ENCODE measurements at regions of chr12 and their contacts with region 1.

Region 1: GRCh38 chr12:15563663-15564062 is 225.5 kb downstream of the EPS8 start:
- DNase-seq: peak in 6 of 9 donors; percentile 39 to 54 (median 50)
- ATAC-seq: peak; percentile 84
- H3K4me3 ChIP-seq: peak overlapping the region; percentile 38
- H3K4me3 Mint-ChIP-seq: peak overlapping the region; percentile 54 to 87 (median 82)
- H3K27ac ChIP-seq: peak overlapping the region; percentile 82
- H3K27ac Mint-ChIP-seq: peak overlapping the region; percentile 87 to 96 (median 94)
- H3K4me1 ChIP-seq: peaks cover 0 to 37% of the 10 kb centered on the region in 2 donors
- H3K4me1 Mint-ChIP-seq: peaks cover 36 to 89% (median 77%) of the 10 kb centered on the region in 7 donors
- H3K27me3 ChIP-seq: no peaks in the 10 kb centered on the region
- H3K27me3 Mint-ChIP-seq: peaks cover 0 to 5% (median 0%) of the 10 kb centered on the region in 5 donors

Region 2: GRCh38 chr12:15276088-15276698 is 287.5 kb before region 1 on chr12:
- CTCF ChIA-PET with region 1: no interaction called
- POLR2A ChIA-PET with region 1: no interaction called
- intact Hi-C with region 1: no loop called
- DNase-seq: peak in 2 of 9 donors; percentile 5 to 13
- ATAC-seq: no peak
- H3K4me3 ChIP-seq: no peak overlapping the region
- H3K4me3 Mint-ChIP-seq: no peak overlapping the region
- H3K27ac ChIP-seq: no peak overlapping the region
- H3K27ac Mint-ChIP-seq: no peak overlapping the region
- H3K4me1 ChIP-seq: no peaks in the 10 kb centered on the region
- H3K4me1 Mint-ChIP-seq: peaks cover 0 to 10% (median 0%) of the 10 kb centered on the region in 7 donors
- H3K27me3 ChIP-seq: no peaks in the 10 kb centered on the region
- H3K27me3 Mint-ChIP-seq: peaks cover 0 to 18% (median 15%) of the 10 kb centered on the region in 5 donors

Region 3: GRCh38 chr12:15575671-15576541 is 12.2 kb after region 1 on chr12:
- CTCF ChIA-PET with region 1: interaction called, 7 read pairs
- POLR2A ChIA-PET with region 1: interaction called, 59 read pairs
- intact Hi-C with region 1: loop called (anchors 1 kb)
- DNase-seq: no peak
- ATAC-seq: no peak
- H3K4me3 ChIP-seq: no peak overlapping the region
- H3K4me3 Mint-ChIP-seq: peak overlapping the region in 3 of 10 donors; percentile 0 to 48 (median 21)
- H3K27ac ChIP-seq: no peak overlapping the region
- H3K27ac Mint-ChIP-seq: peak overlapping the region in 6 of 9 donors; percentile 6 to 74 (median 24)
- H3K4me1 ChIP-seq: peaks cover 0 to 7% of the 10 kb centered on the region in 2 donors
- H3K4me1 Mint-ChIP-seq: peaks cover 11 to 63% (median 47%) of the 10 kb centered on the region in 7 donors
- H3K27me3 ChIP-seq: no peaks in the 10 kb centered on the region
- H3K27me3 Mint-ChIP-seq: no peaks in the 10 kb centered on the region

Region 4: DNA sequence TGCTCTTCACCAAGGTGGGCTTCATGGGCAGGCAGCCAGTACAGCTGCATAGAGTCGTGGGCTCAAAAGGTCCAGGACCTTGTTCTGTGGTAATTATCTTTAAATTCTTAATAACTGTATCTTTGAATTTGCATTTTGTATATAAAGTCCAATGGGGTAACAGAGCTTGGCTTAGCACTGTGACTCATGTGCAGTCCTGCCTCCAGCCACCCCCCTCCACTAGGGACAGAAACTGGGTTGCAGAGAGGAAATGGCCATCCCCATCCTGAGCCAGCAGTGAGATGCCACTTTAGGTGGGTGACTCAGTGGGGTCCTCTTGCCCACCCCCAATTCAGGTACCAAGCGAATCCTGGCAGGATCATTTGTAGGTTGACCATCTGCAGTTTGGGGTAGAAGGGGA is 177.4 kb after region 1 on chr12:
- CTCF ChIA-PET with region 1: no interaction called
- POLR2A ChIA-PET with region 1: no interaction called
- intact Hi-C with region 1: no loop called
- DNase-seq: no peak
- ATAC-seq: no peak
- H3K4me3 ChIP-seq: no peak overlapping the region
- H3K4me3 Mint-ChIP-seq: no peak overlapping the region
- H3K27ac ChIP-seq: no peak overlapping the region
- H3K27ac Mint-ChIP-seq: no peak overlapping the region
- H3K4me1 ChIP-seq: no peaks in the 10 kb centered on the region
- H3K4me1 Mint-ChIP-seq: no peaks in the 10 kb centered on the region
- H3K27me3 ChIP-seq: no peaks in the 10 kb centered on the region
- H3K27me3 Mint-ChIP-seq: peaks cover 4 to 8% (median 5%) of the 10 kb centered on the region in 5 donors

Measured in naive thymus-derived CD4-positive, alpha-beta T cell (primary cell).